ENCODE measurements at regions of chr2 and their contacts with region 1.

Region 1: DNA sequence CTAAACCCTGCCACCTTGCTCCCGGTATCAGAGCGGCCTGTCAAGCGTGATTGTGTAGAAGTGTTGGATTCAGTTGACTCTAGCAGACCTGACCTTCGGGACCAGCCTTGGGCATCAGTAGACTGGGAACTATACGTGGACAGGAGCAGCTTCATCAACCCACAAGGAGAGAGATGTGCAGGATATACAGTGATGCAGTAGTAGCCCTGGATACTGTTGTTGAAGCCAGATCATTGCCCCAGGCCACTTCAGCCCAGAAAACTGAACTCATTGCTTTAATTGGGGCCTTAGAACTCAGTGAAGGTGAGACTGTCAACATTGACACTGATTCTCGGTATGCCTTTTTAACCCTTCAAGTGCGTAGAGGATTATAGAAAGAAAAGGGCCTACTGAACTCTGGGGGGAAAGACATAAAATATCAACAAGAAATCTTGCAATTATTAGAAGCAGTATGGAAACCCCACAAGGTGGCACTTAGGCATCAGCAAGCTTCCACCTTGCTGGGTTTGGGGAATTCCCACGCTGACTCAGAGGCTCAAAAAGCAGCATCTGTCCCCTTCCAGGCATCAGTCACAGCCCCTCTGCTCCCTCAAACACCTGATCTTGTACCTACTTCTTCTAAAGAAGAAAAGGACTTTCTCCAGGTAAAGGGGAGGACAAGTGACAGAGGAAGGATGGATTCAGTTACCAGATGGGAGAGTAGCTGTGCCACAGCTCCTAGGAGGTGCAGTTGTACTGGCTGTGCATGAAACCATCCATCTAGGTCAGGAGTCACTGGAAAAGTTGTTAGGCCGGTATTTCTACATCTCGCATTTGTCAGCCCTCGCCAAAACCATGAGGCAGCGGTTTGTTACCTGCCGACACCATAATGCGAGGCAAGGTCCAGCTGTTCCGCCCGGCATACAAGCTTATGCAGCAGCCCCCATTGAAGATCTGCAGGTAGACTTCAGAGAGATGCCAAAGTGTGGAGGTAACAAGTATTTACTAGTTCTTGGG is 18.8 kb upstream of the NAGK start:
- DNase-seq: peak; percentile 88
- H3K4me3 Mint-ChIP-seq: no peak overlapping the region
- H3K27ac Mint-ChIP-seq: no peak overlapping the region
- H3K4me1 Mint-ChIP-seq: peaks cover 13% of the 10 kb centered on the region
- H3K27me3 Mint-ChIP-seq: no peaks in the 10 kb centered on the region

Region 2: DNA sequence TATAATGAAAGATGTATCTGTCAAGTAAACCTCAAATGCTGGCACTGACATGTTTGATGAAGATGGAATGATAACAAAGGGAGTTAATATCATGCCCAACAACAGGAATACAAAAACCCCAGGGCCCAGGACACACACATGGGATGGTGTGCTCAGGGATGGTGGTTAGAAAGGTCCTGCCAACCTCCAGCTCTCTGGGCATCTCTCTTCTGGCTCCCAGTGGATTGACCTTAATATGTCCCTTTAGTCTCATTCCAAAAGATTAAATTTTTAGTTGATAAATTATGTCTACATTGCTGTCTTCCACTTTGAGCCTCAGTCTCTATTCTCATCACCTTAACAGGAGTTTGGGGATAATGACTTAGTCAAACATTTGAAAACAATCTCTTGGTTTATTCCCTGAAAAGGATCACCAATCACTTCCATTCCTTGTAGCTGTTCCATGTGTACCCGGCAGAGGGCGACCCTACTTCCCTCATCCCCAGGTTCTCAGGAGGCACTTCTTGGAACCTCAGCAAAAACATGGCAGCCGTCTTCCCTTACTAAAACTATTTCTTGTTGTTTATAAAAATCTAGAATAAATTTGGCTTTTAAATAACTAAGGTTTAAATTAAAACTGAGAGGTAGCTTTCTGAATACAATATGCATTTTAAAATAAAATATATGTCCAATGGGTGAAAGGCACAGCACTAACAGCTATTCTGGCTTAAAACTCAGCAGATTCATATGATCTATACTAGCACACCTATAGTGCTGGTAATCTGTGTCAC is 50.7 kb after region 1 on chr2:
- CTCF ChIA-PET with region 1: no interaction called
- intact Hi-C with region 1: loop called (anchors 1 kb)
- DNase-seq: peak; percentile 75
- H3K4me3 Mint-ChIP-seq: no peak overlapping the region
- H3K27ac Mint-ChIP-seq: no peak overlapping the region
- H3K4me1 Mint-ChIP-seq: peaks cover 3% of the 10 kb centered on the region
- H3K27me3 Mint-ChIP-seq: peaks cover 3% of the 10 kb centered on the region

Region 3: GRCh38 chr2:71130113-71130904 is 80.6 kb after region 1 on chr2 and contains the starts of genes MCEE and MPHOSPH10:
- CTCF ChIA-PET with region 1: no interaction called
- intact Hi-C with region 1: loop called (anchors 1 kb)
- DNase-seq: peak; percentile 94
- H3K4me3 Mint-ChIP-seq: no peak within 1 kb of the TSS
- H3K27ac Mint-ChIP-seq: no peak within 1 kb of the TSS
- H3K4me1 Mint-ChIP-seq: peaks cover 16% of the 10 kb centered on the region
- H3K27me3 Mint-ChIP-seq: no peaks in the 10 kb centered on the region
- total RNA-seq, gene MCEE: 14.0 to 15.8 TPM
- total RNA-seq, gene MPHOSPH10: 27.0 to 32.3 TPM

Region 4: DNA sequence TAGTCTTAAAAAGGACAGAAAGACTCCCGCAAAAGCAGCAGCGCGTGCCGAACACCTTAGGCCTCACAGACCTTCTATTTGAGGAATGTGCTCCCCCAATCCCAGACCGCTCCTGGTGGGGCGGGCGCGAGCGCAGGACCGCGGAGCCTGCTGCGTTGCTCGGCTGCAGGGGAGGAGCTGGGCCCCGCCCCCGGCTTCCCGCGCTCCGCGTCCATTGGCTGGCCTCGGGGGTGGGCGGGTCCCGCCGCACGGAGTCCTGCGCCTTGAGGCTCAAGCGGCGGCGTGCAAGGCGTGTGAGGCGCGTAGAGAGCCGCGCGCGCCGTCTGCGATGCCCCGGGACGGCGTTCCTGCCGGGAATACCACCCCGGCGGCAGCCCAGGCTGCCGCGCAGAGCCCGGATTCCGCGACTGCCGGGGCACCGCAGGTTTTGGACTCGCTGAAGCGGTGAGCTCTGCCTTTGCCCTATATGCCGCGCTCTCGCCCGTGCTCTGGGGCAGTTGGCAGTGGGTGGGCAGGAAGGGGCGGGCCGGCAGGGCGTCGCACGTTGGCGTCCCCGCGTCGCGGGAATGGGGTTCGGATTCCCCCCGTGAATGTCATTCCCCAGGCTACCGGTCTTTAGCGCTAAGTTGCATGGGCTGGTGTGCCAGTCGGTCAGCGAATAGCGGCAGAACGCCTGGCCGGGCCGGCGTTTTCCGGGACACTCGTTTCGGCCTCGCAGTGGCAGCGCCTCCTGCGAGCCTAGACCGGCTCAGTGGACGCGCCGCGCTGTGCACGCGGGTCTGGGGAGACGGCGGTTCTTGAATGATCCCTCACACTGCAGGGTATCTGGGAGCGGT is 226.9 kb after region 1 on chr2:
- CTCF ChIA-PET with region 1: no interaction called
- intact Hi-C with region 1: loop called (anchors 1 kb)
- DNase-seq: peak; percentile 87
- H3K4me3 Mint-ChIP-seq: peak overlapping the region; percentile 69
- H3K27ac Mint-ChIP-seq: no peak overlapping the region
- H3K4me1 Mint-ChIP-seq: peaks cover 8% of the 10 kb centered on the region
- H3K27me3 Mint-ChIP-seq: peaks cover 68% of the 10 kb centered on the region

Region 5: DNA sequence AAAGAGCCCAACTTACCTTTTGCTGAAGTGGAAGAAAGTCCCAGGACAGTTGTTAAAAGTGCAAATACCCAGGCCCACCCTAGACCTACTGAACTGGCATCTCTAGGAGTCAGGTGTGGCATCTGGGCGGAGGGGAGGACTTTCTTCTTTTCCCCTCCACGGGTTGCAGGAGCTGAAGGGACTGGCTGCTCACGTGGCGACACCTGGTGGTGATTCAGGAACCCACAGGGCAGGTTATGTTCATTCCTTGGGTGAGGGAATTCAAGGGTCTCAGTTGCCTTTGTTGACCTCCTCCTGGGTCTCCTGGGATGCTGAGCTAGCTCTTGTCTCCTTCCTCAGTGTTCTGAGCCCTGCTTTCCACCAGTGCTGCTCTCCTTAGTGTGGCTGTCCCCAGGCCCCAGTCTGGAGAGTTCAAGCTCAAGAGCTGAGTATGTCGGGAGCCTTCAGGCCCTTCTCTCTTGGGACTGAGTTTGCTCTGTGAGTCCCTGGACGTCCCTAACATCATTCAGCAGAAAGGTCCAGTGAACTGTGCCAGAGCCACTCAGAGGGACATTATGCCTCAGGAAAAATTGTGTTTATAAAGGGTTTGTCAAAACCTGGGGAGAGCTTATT is 460.6 kb after region 1 on chr2:
- CTCF ChIA-PET with region 1: interaction called, 3 read pairs
- intact Hi-C with region 1: loop called (anchors 1 kb)
- DNase-seq: peak; percentile 80
- H3K4me3 Mint-ChIP-seq: no peak overlapping the region
- H3K27ac Mint-ChIP-seq: no peak overlapping the region
- H3K4me1 Mint-ChIP-seq: no peaks in the 10 kb centered on the region
- H3K27me3 Mint-ChIP-seq: peaks cover 3% of the 10 kb centered on the region